Activated B cell treated with CpG ODN at 0.5 μM for 24 hours (primary cell): ENCODE measurements at regions of chr11 and their contacts with region 1.

Region 1: DNA sequence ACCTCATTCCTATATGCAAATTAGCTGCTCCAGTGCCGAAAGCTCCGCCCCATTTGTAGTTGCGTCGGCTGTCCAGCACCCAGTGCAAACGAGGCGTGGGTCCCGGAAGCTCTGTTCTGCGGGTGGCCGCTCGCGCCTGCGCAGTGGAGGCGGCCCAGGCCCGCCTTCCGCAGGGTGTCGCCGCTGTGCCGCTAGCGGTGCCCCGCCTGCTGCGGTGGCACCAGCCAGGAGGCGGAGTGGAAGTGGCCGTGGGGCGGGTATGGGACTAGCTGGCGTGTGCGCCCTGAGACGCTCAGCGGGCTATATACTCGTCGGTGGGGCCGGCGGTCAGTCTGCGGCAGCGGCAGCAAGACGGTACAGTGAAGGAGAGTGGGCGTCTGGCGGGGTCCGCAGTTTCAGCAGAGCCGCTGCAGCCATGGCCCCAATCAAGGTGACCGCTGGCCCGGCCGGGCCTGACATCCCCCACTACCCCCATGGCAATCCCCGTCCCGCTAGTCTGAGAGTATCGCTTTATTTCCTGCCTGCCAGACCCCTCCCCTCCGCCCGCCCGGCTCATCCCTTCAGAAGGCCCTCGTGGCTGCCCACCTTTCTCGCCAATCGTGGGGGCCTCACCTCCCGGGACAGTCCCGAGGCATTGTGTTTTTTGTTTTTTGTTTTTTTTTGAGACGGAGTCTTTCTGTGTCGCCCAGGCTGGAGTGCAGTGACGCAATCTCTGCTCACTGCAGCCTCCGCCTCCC is at the start of gene PRDX5:
- DNase-seq: peak; percentile 91
- ATAC-seq: peak; percentile 81
- H3K4me3 Mint-ChIP-seq: peak within 1 kb of the TSS; percentile 94
- H3K27ac Mint-ChIP-seq: peak within 1 kb of the TSS; percentile 99
- H3K4me1 Mint-ChIP-seq: peaks cover 24% of the 10 kb centered on the region
- H3K27me3 Mint-ChIP-seq: no peaks in the 10 kb centered on the region
- CTCF ChIP-seq: no peak
- total RNA-seq, gene PRDX5: 73.6 and 85.8 TPM in 2 replicates

Region 2: GRCh38 chr11:64185816-64186498 is 132.2 kb before region 1 on chr11 and contains the start of gene STIP1:
- CTCF ChIA-PET with region 1: interaction called, 4 read pairs
- POLR2A ChIA-PET with region 1: interaction called, 11 read pairs
- intact Hi-C with region 1: no loop called
- DNase-seq: peak; percentile 93
- ATAC-seq: peak; percentile 87
- H3K4me3 Mint-ChIP-seq: no peak within 1 kb of the TSS
- H3K27ac Mint-ChIP-seq: peak within 1 kb of the TSS; percentile 97
- H3K4me1 Mint-ChIP-seq: peaks cover 27% of the 10 kb centered on the region
- H3K27me3 Mint-ChIP-seq: no peaks in the 10 kb centered on the region
- CTCF ChIP-seq: no peak
- total RNA-seq, gene STIP1: 155 and 159 TPM in 2 replicates

Region 3: DNA sequence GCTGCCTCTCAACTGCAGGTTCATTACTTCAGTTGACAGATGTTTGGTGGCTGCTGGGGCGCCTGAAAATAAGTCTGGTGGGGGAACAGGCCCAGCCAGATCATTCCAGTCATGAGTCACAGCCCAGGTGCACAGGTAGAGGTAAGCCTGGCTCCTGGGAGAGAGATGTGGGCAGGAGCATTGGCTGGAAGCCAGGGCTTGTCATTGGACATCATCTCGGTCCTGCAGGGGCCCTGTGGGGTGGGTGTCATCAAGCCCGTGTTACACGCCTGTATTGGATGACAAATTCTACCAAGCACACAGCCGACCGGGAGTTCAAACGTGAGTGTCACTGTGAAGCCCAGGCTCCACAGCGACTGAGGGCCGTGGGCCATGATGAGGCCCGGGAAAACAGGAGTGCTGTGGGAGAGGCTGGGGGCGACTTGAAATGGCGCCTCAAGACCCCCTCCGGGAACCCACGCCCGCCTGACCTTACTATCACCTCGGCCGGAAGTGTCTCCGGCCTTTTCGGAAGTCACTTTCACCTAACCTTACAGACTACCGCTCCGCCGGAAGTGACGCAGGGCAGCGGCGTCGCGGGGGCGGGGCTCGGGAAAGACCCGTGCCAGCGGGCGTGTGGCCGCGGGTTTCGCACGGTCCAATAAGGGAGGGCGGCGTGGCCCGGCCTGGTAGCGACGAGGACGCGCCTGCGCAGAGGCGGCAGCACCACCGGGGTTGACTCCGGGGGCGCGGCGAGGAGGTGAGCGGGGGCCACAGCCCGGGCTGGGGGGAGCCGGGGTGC is 77.5 kb before region 1 on chr11 and contains the start of gene FKBP2:
- CTCF ChIA-PET with region 1: interaction called, 3 read pairs
- POLR2A ChIA-PET with region 1: interaction called, 11 read pairs
- intact Hi-C with region 1: no loop called
- DNase-seq: peak; percentile 98
- ATAC-seq: peak; percentile 61
- H3K4me3 Mint-ChIP-seq: peak within 1 kb of the TSS; percentile 91
- H3K27ac Mint-ChIP-seq: peak within 1 kb of the TSS; percentile 98
- H3K4me1 Mint-ChIP-seq: peaks cover 75% of the 10 kb centered on the region
- H3K27me3 Mint-ChIP-seq: no peaks in the 10 kb centered on the region
- CTCF ChIP-seq: no peak
- total RNA-seq, gene FKBP2: 31.4 and 39.4 TPM in 2 replicates

Region 4: GRCh38 chr11:64298966-64299846 is 18.9 kb before region 1 on chr11:
- CTCF ChIA-PET with region 1: interaction called, 28 read pairs
- POLR2A ChIA-PET with region 1: interaction called, 40 read pairs
- intact Hi-C with region 1: no loop called
- DNase-seq: peak; percentile 31
- ATAC-seq: no peak
- H3K4me3 Mint-ChIP-seq: peak overlapping the region; percentile 53
- H3K27ac Mint-ChIP-seq: no peak overlapping the region
- H3K4me1 Mint-ChIP-seq: peaks cover 26% of the 10 kb centered on the region
- H3K27me3 Mint-ChIP-seq: peaks cover 46% of the 10 kb centered on the region
- CTCF ChIP-seq: no peak

Region 5: DNA sequence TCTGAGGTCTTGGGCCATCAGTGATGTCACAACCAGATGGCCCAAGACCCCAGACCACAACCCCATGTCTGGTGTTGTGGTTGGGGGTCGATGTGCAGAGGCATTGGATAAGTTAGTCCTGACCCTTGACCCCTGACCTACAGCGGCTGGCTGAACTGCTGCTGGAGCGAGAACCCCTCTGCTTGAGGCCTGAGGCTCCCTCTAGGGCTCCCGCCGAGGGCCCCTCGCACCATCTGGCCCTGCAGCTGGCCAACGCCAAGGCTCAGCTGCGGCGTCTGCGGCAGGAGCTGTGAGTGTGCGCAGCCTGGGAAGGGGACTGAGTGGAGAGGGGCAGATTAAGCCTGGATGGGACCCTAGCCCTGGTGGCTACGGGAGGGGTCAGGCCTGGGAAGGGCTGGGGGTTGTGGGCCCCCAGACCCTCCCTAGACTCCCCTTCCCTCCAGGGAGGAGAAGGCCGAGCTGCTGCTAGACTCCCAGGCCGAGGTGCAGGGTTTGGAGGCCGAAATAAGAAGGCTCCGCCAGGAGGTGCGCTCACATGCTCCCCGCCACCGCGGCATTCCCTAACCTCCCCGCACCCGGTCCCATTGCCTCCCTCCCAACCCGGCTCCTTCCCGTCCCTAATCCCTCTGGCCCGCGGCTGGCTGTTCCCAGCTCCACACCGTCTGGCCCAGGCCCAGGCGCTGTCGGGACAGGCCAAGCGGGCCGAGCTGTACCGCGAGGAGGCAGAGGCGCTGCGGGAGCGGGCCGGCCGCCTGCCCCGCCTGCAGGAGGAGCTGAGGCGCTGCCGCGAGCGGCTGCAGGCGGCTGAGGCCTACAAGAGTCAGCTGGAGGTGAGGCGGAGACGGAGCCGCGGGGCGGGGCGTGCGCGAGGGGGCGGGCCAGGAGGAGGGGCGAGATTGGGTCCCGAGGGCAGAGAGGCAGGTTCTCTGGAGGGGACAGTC is 24.0 kb after region 1 on chr11:
- CTCF ChIA-PET with region 1: interaction called, 69 read pairs
- POLR2A ChIA-PET with region 1: interaction called, 94 read pairs
- intact Hi-C with region 1: loop called (anchors 1 kb)
- DNase-seq: peak; percentile 87
- ATAC-seq: peak; percentile 51
- H3K4me3 Mint-ChIP-seq: peak overlapping the region; percentile 19
- H3K27ac Mint-ChIP-seq: no peak overlapping the region
- H3K4me1 Mint-ChIP-seq: peaks cover 54% of the 10 kb centered on the region
- H3K27me3 Mint-ChIP-seq: no peaks in the 10 kb centered on the region
- CTCF ChIP-seq: no peak

Region 6: GRCh38 chr11:64583296-64584232 is 265.4 kb after region 1 on chr11:
- CTCF ChIA-PET with region 1: no interaction called
- POLR2A ChIA-PET with region 1: no interaction called
- intact Hi-C with region 1: no loop called
- DNase-seq: no peak
- ATAC-seq: no peak
- H3K4me3 Mint-ChIP-seq: no peak overlapping the region
- H3K27ac Mint-ChIP-seq: no peak overlapping the region
- H3K4me1 Mint-ChIP-seq: no peaks in the 10 kb centered on the region
- H3K27me3 Mint-ChIP-seq: peaks cover 19% of the 10 kb centered on the region
- CTCF ChIP-seq: no peak

Region 7: DNA sequence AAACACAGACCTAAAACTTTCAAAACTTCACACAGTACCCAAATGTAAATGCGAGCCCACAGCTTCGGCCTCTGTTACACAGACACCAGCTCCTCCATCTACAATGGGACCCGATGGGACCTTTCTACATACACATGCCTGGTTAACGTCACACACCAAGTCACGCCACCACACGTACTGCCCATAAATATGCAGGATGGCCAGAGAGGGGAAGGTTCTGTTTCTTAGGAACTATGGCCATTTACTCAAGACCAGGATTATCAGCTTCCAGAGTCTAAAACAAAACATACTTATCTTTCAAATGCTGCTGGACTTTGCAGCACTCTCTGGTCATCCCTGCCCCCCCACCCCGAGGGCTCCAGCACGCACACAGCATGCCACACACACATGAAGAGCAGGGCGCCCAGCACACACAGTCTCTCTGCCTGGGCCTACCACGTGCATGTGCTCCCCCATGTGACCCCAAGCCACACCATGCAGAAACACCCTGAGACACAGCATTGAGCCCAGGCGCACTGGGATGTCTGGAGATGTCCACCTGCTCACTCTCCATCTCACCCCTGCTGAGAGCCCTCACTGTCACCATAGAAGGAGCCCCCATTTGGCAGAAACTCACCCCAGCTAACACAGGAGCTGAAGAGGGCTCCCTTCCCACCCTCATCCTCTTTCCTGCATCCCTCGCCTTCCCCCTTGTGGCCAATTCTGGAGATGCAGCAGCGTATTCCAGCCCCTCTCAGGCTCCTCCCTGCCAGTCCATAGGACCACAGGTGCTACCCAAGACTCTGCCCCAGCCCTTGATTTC is 334.7 kb after region 1 on chr11:
- CTCF ChIA-PET with region 1: interaction called, 27 read pairs
- POLR2A ChIA-PET with region 1: no interaction called
- intact Hi-C with region 1: loop called (anchors 1 kb)
- DNase-seq: peak; percentile 59
- ATAC-seq: peak; percentile 60
- H3K4me3 Mint-ChIP-seq: no peak overlapping the region
- H3K27ac Mint-ChIP-seq: no peak overlapping the region
- H3K4me1 Mint-ChIP-seq: peaks cover 27% of the 10 kb centered on the region
- H3K27me3 Mint-ChIP-seq: peaks cover 5% of the 10 kb centered on the region
- CTCF ChIP-seq: no peak

Region 8: GRCh38 chr11:64778508-64779346 is 460.6 kb after region 1 on chr11 and contains the start of gene SF1:
- CTCF ChIA-PET with region 1: no interaction called
- POLR2A ChIA-PET with region 1: interaction called, 10 read pairs
- intact Hi-C with region 1: no loop called
- DNase-seq: peak; percentile 91
- ATAC-seq: peak; percentile 81
- H3K4me3 Mint-ChIP-seq: peak within 1 kb of the TSS; percentile 90
- H3K27ac Mint-ChIP-seq: peak within 1 kb of the TSS; percentile 99
- H3K4me1 Mint-ChIP-seq: peaks cover 75% of the 10 kb centered on the region
- H3K27me3 Mint-ChIP-seq: no peaks in the 10 kb centered on the region
- CTCF ChIP-seq: no peak
- total RNA-seq, gene SF1: 640 and 687 TPM in 2 replicates

Region 9: DNA sequence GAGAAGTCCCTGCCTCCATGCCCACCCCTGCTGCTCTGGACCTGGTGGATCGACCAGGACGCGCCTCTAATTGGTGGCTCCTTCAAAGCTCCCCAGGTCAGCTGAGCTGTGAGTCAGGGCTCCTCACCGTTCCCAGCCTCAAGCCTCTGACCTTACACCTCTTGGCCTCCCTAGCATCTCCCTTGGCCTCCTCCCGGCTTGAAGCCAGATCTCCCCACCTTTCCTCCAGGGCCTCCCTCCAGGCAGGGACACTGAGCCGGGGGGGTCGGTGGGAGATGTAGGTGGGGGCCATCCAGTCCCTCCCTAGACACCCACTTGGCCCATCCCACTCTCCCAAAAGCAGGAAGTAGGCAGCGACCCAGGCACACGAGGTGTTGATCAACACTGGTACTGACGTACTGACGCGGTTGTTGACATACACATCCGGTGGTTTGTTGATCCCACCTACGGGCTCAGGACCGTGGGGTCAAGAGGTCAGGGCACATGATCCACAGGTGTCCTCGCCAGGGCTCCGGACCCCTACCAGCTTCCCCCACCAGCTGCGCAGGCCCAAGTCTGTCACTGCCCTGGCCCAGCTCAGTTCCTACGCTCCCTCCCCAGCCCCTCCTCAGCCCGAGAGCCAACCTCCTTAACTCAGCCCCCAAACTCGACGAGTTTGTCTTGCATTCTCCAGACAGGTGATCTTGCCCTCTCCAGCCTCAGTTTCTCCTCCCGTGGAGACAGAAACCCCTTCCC is 598.1 kb after region 1 on chr11:
- CTCF ChIA-PET with region 1: no interaction called
- POLR2A ChIA-PET with region 1: no interaction called
- intact Hi-C with region 1: no loop called
- DNase-seq: no peak
- ATAC-seq: no peak
- H3K4me3 Mint-ChIP-seq: peak overlapping the region; percentile 88
- H3K27ac Mint-ChIP-seq: peak overlapping the region; percentile 85
- H3K4me1 Mint-ChIP-seq: peaks cover 38% of the 10 kb centered on the region
- H3K27me3 Mint-ChIP-seq: no peaks in the 10 kb centered on the region
- CTCF ChIP-seq: no peak